ENCODE measurements at regions of chr17 and their contacts with region 1.

Region 1: GRCh38 chr17:2416010-2416734 is 15.3 kb upstream of the MNT start:
- DNase-seq: peak; percentile 83 to 96 (median 88)
- ATAC-seq: peak; percentile 96
- H3K4me3 ChIP-seq: no peak overlapping the region
- H3K27ac ChIP-seq: no peak overlapping the region
- H3K4me1 ChIP-seq: peaks cover 0 to 9% of the 10 kb centered on the region in 2 donors
- H3K27me3 ChIP-seq: no peaks in the 10 kb centered on the region
- CTCF ChIP-seq: peak; percentile 98 to 99

Region 2: DNA sequence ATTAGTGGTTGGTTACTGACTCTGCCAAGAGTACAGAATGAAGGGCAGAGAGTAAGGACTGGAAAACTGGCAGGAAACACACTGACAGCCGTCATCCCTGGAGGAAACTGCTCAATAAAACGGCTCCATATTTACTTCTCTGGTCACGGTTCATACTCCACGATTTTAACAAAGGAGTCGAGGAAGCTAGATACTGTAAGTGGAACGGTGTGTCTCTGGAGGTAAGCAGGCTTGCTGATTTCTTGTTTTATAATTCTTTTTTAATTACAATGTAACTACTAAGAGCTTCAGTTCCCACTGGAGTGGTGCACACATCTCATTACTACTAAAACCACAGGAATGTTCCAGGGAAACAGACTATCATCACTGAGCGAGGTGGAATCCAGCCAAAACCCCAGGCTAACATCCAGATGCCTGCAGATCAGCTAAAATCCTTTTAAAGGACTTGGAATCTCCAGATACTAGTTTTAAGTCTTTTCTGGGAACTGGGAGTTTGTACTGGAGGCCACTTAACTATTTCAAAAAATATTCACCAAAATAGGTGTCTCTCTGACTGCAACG is 636.5 kb before region 1 on chr17:
- intact Hi-C with region 1: no loop called
- DNase-seq: peak in 3 of 4 donors; percentile 76 to 86 (median 77)
- ATAC-seq: peak; percentile 15
- H3K4me3 ChIP-seq: no peak overlapping the region
- H3K27ac ChIP-seq: peak overlapping the region; percentile 76 to 91
- H3K4me1 ChIP-seq: peaks cover 35 to 63% of the 10 kb centered on the region in 2 donors
- H3K27me3 ChIP-seq: no peaks in the 10 kb centered on the region
- CTCF ChIP-seq: no peak

Region 3: GRCh38 chr17:2380226-2380922 is 35.8 kb before region 1 on chr17:
- intact Hi-C with region 1: loop called in 1 of 2 experiments (anchors 5 kb)
- DNase-seq: no peak
- ATAC-seq: no peak
- H3K4me3 ChIP-seq: no peak overlapping the region
- H3K27ac ChIP-seq: no peak overlapping the region
- H3K4me1 ChIP-seq: peaks cover 5 to 8% of the 10 kb centered on the region in 2 donors
- H3K27me3 ChIP-seq: no peaks in the 10 kb centered on the region
- CTCF ChIP-seq: no peak

Measured in left lung (tissue), 14 donors.